CD14-positive monocyte (primary cell): ENCODE measurements at regions of chr9 and their contacts with region 1.

Region 1: GRCh38 chr9:127943731-127944144 is 6.1 kb upstream of the DPM2 start:
- DNase-seq: peak; percentile 71 to 83 (median 79)
- H3K4me3 ChIP-seq: no peak overlapping the region
- H3K4me3 Mint-ChIP-seq: peak overlapping the region in 1 of 2 donors; percentile 72
- H3K27ac ChIP-seq: no peak overlapping the region
- H3K27ac Mint-ChIP-seq: peak overlapping the region in 1 of 7 donors; percentile 57
- H3K4me1 ChIP-seq: peaks cover 11 to 13% of the 10 kb centered on the region in 2 donors
- H3K4me1 Mint-ChIP-seq: peaks cover 13% of the 10 kb centered on the region
- H3K27me3 ChIP-seq: no peaks in the 10 kb centered on the region
- H3K27me3 Mint-ChIP-seq: peaks cover 0 to 3% (median 0%) of the 10 kb centered on the region in 3 donors
- CTCF ChIP-seq: peak; percentile 78

Region 2: DNA sequence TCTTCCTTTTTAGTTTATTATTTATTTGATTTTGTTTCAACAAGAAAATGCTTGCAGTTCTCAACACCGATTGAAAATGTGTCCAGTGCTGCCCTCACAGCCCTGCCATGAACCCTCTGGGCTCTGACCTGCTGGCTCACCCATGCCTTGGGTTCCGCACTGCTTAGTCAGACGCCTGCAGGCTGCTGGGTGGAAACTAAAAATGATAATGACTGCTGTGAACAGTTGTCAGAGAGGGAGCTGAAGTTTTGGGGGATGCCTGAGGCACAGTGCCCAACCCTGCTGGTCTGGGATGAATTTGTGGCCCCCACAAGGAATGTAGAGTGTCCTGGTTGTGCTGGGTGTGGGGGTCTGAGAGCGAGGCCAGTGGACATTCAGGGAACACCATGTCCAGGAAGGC is 259.2 kb before region 1 on chr9:
- intact Hi-C with region 1: no loop called
- DNase-seq: no peak
- H3K4me3 ChIP-seq: no peak overlapping the region
- H3K4me3 Mint-ChIP-seq: no peak overlapping the region
- H3K27ac ChIP-seq: no peak overlapping the region
- H3K27ac Mint-ChIP-seq: no peak overlapping the region
- H3K4me1 ChIP-seq: no peaks in the 10 kb centered on the region
- H3K4me1 Mint-ChIP-seq: no peaks in the 10 kb centered on the region
- H3K27me3 ChIP-seq: no peaks in the 10 kb centered on the region
- H3K27me3 Mint-ChIP-seq: peaks cover 0 to 6% (median 2%) of the 10 kb centered on the region in 3 donors
- CTCF ChIP-seq: no peak

Region 3: DNA sequence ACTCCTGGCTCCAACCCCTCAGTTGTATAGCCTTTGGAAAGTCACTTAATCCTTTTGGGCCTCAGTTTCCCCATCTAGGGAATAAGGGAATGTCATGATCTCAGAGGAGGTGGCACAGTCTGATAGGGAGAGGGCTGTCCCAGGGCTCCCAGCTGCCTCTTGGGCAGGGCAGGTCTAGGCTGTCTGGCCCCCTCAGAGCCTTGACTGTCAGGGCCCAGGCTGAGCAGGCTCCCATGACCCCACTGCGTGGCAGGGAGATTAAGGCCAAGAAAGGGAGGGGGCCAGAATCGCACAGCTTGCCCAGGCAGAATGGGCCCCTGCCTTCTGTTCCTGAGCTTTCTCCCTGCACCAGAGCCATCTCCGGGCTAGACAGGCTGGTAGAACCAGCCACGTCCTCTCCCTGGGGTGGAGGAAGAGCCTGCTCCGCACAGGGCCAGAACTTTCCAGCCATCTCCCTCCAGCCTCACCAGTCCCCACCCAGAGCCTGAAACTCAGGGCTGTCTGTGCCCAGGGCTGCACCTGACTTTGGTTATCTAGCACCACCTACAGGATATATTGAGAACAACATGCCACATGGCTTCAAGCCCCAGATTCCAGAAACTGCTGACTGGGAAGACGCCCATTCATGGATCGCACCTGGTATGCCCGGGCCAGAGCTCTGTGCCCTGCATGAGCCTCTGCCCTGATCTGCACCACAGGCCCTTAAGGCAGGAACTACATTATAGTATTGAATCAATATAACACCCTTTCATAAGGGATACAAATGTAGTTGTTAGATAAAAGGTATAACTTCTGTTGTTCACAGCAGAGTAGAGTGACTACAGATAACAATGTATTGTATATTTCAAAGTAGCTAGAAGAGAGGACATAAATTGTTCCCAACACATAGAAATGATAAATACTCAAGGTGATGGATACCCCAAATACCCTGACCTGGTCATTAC is 91.4 kb after region 1 on chr9:
- intact Hi-C with region 1: loop called (anchors 1 to 2 kb)
- DNase-seq: peak; percentile 57 to 71 (median 69)
- H3K4me3 ChIP-seq: no peak overlapping the region
- H3K4me3 Mint-ChIP-seq: no peak overlapping the region
- H3K27ac ChIP-seq: no peak overlapping the region
- H3K27ac Mint-ChIP-seq: no peak overlapping the region
- H3K4me1 ChIP-seq: no peaks in the 10 kb centered on the region
- H3K4me1 Mint-ChIP-seq: peaks cover 8% of the 10 kb centered on the region
- H3K27me3 ChIP-seq: no peaks in the 10 kb centered on the region
- H3K27me3 Mint-ChIP-seq: peaks cover 0 to 5% (median 0%) of the 10 kb centered on the region in 3 donors
- CTCF ChIP-seq: peak; percentile 94

Region 4: DNA sequence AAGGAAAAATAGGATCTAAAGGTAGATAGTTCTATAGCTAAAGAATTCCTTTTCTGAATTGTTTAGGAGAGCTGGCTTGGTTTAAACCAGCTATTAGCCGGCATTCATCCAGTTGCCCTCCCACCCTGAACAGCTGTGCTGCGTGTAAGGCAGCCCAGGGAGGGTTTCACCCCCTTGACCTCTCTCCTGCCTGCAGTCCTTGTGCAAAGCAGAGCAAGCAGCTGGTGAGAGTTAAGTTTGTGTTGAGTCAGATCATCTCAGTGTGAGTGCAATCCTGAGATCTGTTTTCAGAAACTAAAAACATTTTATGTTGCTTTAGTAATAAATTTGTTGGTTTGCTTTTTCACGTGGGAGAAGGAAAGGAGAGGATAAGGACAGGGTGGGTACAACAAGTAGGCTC is 137.3 kb after region 1 on chr9:
- intact Hi-C with region 1: loop called in 1 of 2 experiments (anchors 10 kb)
- DNase-seq: no peak
- H3K4me3 ChIP-seq: no peak overlapping the region
- H3K4me3 Mint-ChIP-seq: no peak overlapping the region
- H3K27ac ChIP-seq: no peak overlapping the region
- H3K27ac Mint-ChIP-seq: peak overlapping the region in 2 of 7 donors; percentile 17 to 75
- H3K4me1 ChIP-seq: peaks cover 33 to 40% of the 10 kb centered on the region in 2 donors
- H3K4me1 Mint-ChIP-seq: peaks cover 42% of the 10 kb centered on the region
- H3K27me3 ChIP-seq: no peaks in the 10 kb centered on the region
- H3K27me3 Mint-ChIP-seq: peaks cover 0 to 2% (median 0%) of the 10 kb centered on the region in 3 donors
- CTCF ChIP-seq: no peak

Region 5: GRCh38 chr9:128117613-128118471 is 174.1 kb after region 1 on chr9:
- intact Hi-C with region 1: loop called in 1 of 2 experiments (anchors 5 kb)
- DNase-seq: peak; percentile 88 to 91 (median 88)
- H3K4me3 ChIP-seq: no peak overlapping the region
- H3K4me3 Mint-ChIP-seq: no peak overlapping the region
- H3K27ac ChIP-seq: no peak overlapping the region
- H3K27ac Mint-ChIP-seq: peak overlapping the region in 1 of 7 donors; percentile 19
- H3K4me1 ChIP-seq: peaks cover 8 to 17% of the 10 kb centered on the region in 2 donors
- H3K4me1 Mint-ChIP-seq: peaks cover 15% of the 10 kb centered on the region
- H3K27me3 ChIP-seq: no peaks in the 10 kb centered on the region
- H3K27me3 Mint-ChIP-seq: peaks cover 2 to 6% (median 3%) of the 10 kb centered on the region in 3 donors
- CTCF ChIP-seq: peak; percentile 100